Activated T-helper 1 cell treated with anti-CD3 and anti-CD28 coated beads, Interleukin-12 subunit alpha, Interleukin-12 subunit beta, Interleukin-2, Interleukin-4 antibody, amounts not matched to agents 30 ng/mL and 10 ng/mL and 1 ng/mL, durations not matched to agents 14 hours and 24 hours and 36 hours (primary cell): ENCODE measurements at regions of chr6 and their contacts with region 1.

Region 1: DNA sequence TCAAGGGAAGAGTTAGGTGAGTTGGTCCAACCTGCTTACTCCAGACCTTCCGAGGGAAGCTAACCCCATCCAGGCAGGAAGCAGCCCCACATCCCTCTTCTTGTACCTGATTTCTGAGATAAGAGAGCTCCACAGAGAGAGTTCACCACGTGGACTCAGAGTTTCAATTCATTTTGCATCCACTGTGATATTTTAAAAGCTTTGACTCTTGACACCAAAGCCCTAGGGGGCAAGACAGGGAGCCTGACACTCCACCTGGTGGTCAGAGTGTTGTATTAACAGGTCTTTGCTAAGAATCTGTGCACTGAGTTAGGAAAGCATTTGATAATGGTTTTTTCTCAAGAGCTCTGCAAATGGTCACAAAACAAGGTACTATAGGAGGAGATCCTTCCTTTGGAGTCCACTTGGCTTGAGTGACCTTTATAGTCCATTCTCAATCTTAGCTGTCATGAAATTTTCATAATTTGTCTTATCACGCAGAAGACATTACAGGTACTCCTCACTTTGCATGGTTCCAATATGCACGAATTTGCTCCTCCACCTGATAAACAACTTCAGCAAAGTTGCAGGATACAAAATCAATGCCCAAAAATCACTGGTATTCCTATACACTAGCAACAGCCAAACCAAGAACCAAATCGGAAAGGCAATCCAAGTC is 56.2 kb upstream of the RIPOR2 start:
- DNase-seq: peak; percentile 71
- H3K4me3 Mint-ChIP-seq: peak overlapping the region; percentile 21
- H3K27ac Mint-ChIP-seq: peak overlapping the region; percentile 80
- H3K4me1 Mint-ChIP-seq: peaks cover 40% of the 10 kb centered on the region
- H3K27me3 Mint-ChIP-seq: no peaks in the 10 kb centered on the region

Region 2: DNA sequence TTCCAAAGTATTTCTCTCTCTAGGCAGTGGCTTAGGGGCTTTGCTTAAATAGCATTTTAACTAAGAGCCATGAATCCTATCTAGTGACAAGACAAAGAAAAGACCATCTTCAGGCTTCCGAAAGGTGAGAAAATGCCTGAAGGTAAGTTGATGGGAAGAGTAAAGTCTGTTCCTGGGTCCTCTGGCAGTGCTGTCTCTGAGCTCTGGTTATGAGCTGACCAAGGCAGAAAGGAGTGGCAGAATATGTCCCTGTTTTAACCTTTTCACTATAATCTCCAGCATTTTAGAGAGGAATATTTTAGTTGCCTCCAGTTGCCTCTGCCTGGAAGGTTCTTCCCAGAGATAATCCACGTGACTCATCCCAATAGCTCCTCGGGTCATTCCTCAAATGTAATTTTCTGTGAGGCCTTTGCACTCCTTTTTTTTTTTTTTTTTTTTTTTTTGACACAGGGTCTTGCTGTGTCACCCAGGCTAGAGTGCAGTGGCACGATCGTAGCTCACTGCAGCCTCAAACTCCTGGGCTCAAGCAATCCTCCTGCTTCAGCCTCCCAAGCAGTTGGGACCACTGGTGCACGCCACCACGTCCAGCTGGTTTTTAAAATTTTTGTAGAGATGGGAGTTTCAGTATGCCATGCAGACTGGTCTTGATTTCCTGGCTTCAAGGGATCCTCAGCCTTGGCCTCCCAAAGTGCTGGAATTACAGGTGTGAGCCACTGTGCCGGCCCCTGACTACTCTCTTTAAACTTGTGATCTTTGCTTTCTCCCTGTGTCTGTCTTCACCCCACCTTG is 189.5 kb before region 1 on chr6:
- intact Hi-C with region 1: loop called (anchors 1 kb)
- DNase-seq: no peak
- H3K4me3 Mint-ChIP-seq: no peak overlapping the region
- H3K27ac Mint-ChIP-seq: peak overlapping the region; percentile 66
- H3K4me1 Mint-ChIP-seq: peaks cover 14% of the 10 kb centered on the region
- H3K27me3 Mint-ChIP-seq: no peaks in the 10 kb centered on the region

Region 3: GRCh38 chr6:24883618-24884017 is 108.3 kb before region 1 on chr6:
- intact Hi-C with region 1: no loop called
- DNase-seq: no peak
- H3K4me3 Mint-ChIP-seq: peak overlapping the region; percentile 66
- H3K27ac Mint-ChIP-seq: peak overlapping the region; percentile 91
- H3K4me1 Mint-ChIP-seq: peaks cover 79% of the 10 kb centered on the region
- H3K27me3 Mint-ChIP-seq: no peaks in the 10 kb centered on the region

Region 4: DNA sequence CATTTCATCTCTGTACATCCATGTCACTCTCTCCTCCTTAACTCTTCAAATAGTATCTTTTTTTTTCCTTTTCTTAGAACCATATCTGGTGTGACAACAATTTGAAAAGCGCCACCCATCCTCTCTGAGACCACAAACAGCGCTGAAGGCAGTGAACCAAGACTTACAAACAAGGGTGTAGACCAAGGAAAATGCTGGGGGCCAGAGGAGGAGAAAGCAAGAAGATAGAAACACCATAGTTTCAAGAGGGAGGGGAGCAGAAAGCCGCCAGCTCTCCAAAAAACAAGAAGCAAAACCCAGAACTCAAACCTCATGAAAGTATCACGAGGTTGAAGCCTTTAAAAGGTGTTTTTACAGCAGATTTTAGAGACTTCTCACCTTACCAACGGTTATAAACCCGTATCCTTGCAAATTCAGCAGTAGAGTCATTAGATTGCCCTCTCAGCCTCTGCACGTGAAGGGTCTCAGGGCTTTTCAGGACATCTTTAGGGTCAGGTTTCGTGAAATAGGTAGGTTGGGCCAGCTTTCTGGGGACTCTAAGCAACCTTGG is 42.8 kb before region 1 on chr6:
- intact Hi-C with region 1: loop called (anchors 2 kb)
- DNase-seq: peak; percentile 68
- H3K4me3 Mint-ChIP-seq: peak overlapping the region; percentile 65
- H3K27ac Mint-ChIP-seq: peak overlapping the region; percentile 95
- H3K4me1 Mint-ChIP-seq: peaks cover 76% of the 10 kb centered on the region
- H3K27me3 Mint-ChIP-seq: no peaks in the 10 kb centered on the region

Region 5: GRCh38 chr6:25017932-25018567 is 26.1 kb after region 1 on chr6:
- intact Hi-C with region 1: loop called (anchors 1 kb)
- DNase-seq: peak; percentile 70
- H3K4me3 Mint-ChIP-seq: no peak overlapping the region
- H3K27ac Mint-ChIP-seq: no peak overlapping the region
- H3K4me1 Mint-ChIP-seq: peaks cover 50% of the 10 kb centered on the region
- H3K27me3 Mint-ChIP-seq: no peaks in the 10 kb centered on the region

Region 6: GRCh38 chr6:25078141-25078540 is 86.2 kb after region 1 on chr6:
- intact Hi-C with region 1: no loop called
- DNase-seq: no peak
- H3K4me3 Mint-ChIP-seq: no peak overlapping the region
- H3K27ac Mint-ChIP-seq: no peak overlapping the region
- H3K4me1 Mint-ChIP-seq: peaks cover 11% of the 10 kb centered on the region
- H3K27me3 Mint-ChIP-seq: no peaks in the 10 kb centered on the region